Activated naive CD8-positive, alpha-beta T cell treated with anti-CD3 and anti-CD28 coated beads, Interleukin-2, amount 10 ng/mL, durations not matched to agents 7 days and 5 days (primary cell): ENCODE measurements at regions of chr1 and their contacts with region 1.

Region 1: GRCh38 chr1:77978969-77979876 is at the start of gene FUBP1:
- DNase-seq: peak; percentile 86
- ATAC-seq: peak; percentile 83
- H3K4me3 Mint-ChIP-seq: no peak within 1 kb of the TSS
- H3K27ac Mint-ChIP-seq: no peak within 1 kb of the TSS
- H3K4me1 Mint-ChIP-seq: peaks cover 35% of the 10 kb centered on the region
- H3K27me3 Mint-ChIP-seq: no peaks in the 10 kb centered on the region
- total RNA-seq, gene FUBP1: 223 to 228 TPM

Region 2: DNA sequence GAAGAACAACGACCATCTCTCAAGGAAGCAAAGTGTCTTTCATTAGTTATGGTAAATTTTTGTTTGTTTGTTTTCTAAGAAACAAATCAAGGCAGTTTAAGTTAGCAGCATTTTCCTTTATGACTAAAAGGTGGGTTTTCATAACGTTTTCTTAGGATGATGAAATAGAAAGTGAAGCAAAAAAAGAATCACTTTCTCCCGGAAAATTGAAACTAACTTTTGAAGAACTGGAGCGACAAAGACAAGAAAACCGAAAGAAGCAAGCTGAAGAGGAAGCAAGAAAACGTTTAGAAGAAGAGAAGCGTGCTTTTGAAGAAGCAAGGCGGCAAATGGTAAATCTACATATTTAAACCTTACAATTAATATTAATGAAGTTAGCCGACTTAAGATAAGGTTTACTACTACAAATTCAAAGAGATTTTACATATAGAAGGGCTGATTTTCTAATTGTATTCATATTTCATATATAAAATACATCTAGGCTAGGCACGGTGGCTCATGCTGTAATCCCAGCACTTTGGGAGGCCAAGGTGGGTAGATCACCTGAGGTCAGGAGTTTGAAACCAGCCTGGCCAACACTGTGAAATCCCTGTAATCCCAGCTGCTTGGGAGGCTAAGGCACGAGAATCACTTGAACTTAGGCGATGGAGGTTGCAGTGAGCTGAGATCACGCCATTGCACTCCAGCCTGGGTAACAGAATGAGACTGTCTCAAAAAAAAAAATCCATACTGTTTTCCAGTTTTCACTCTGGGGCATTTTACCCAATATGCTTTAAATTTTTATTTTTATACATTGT is 52.5 kb before region 1 on chr1:
- POLR2A ChIA-PET with region 1: no interaction called
- DNase-seq: no peak
- ATAC-seq: no peak
- H3K4me3 Mint-ChIP-seq: peak overlapping the region; percentile 74
- H3K27ac Mint-ChIP-seq: peak overlapping the region; percentile 76
- H3K4me1 Mint-ChIP-seq: peaks cover 7% of the 10 kb centered on the region
- H3K27me3 Mint-ChIP-seq: no peaks in the 10 kb centered on the region

Region 3: GRCh38 chr1:77940921-77941570 is 38.2 kb before region 1 on chr1:
- POLR2A ChIA-PET with region 1: no interaction called
- DNase-seq: no peak
- ATAC-seq: no peak
- H3K4me3 Mint-ChIP-seq: no peak overlapping the region
- H3K27ac Mint-ChIP-seq: no peak overlapping the region
- H3K4me1 Mint-ChIP-seq: peaks cover 8% of the 10 kb centered on the region
- H3K27me3 Mint-ChIP-seq: no peaks in the 10 kb centered on the region

Region 4: DNA sequence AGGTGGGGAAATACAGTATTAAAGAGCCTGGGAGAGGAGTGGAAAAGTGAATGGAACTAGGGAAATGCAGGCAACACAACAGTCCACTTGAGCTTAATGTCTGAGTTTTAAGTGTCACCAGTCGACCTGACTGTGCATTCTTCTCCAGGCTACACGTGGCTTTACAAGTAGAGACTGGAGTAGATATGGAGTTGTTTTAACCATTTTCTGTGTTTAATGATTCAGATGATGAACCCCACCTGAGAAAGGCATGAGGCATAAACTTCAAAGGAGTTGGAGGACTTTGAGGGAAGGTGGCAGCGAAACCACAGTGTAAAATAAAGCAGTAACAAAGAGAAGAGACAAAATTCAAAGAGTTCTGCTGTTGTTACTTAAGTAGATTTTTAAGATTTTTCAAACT is 12.9 kb before region 1 on chr1:
- POLR2A ChIA-PET with region 1: interaction called, 36 read pairs
- DNase-seq: no peak
- ATAC-seq: peak; percentile 45
- H3K4me3 Mint-ChIP-seq: no peak overlapping the region
- H3K27ac Mint-ChIP-seq: peak overlapping the region; percentile 68
- H3K4me1 Mint-ChIP-seq: peaks cover 29% of the 10 kb centered on the region
- H3K27me3 Mint-ChIP-seq: no peaks in the 10 kb centered on the region

Region 5: DNA sequence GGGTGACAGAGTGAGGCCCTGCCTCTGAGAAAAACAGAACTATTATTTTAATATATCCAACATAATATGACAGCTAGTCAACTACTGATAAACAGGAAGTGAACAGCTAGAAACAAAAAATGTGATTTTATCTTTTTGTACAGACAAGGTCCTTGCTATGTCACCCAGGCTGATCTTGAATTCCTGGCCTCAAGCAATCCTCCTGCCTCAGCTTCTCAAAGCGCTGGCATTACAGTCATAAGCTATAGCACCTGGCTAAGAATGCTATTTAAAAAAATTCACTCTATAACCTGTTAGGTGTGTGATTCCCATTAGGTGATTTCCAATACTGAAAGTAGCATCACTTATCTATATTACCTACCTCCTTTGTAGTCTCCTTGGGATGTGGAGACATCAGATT is 49.8 kb after region 1 on chr1:
- POLR2A ChIA-PET with region 1: no interaction called
- DNase-seq: no peak
- ATAC-seq: no peak
- H3K4me3 Mint-ChIP-seq: no peak overlapping the region
- H3K27ac Mint-ChIP-seq: no peak overlapping the region
- H3K4me1 Mint-ChIP-seq: no peaks in the 10 kb centered on the region
- H3K27me3 Mint-ChIP-seq: peaks cover 4% of the 10 kb centered on the region